Activated T-helper 1 cell treated with anti-CD3 and anti-CD28 coated beads, Interleukin-12 subunit alpha, Interleukin-12 subunit beta, Interleukin-2, Interleukin-4 antibody, amounts not matched to agents 30 ng/mL and 10 ng/mL and 1 ng/mL, durations not matched to agents 14 hours and 24 hours and 36 hours (primary cell): ENCODE measurements at regions of chr19 and their contacts with region 1.

Region 1: DNA sequence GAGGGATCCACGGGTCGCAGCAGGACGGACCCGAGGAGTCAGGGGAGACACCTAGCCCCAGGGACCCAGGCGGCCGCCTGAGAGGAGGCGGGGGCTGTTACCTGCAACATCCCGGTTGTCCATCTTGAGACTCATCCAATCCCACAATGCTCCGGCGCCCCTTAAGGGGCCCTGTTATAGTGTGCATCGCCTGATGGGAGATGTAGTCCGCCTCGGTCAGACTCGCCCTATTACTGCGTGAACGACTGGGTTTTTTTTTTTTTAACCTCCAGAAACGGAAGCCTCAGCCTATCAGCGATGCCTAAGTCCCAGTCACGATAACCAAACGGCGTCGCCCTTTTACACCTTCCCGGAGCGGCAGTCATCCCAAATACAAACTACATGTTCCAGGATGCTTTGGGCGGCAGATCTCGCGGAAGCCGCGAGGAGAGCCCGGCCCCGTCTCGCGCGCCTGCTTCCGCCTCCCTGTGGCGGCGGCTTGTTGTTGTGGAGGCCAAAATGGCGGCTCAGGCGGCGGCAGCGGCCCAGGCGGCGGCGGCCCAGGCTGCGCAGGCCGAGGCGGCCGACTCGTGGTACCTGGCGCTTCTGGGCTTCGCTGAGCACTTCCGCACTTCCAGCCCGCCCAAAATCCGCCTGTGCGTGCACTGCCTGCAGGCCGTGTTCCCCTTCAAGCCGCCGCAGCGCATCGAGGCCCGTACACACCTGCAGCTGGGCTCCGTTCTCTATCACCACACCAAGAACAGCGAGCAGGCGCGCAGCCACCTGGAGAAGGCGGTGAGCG is at the starts of genes MAU2 and SUGP1:
- DNase-seq: peak; percentile 89
- H3K4me3 Mint-ChIP-seq: peak within 1 kb of the TSS; percentile 94
- H3K27ac Mint-ChIP-seq: peak within 1 kb of the TSS; percentile 98
- H3K4me1 Mint-ChIP-seq: peaks cover 20% of the 10 kb centered on the region
- H3K27me3 Mint-ChIP-seq: no peaks in the 10 kb centered on the region
- total RNA-seq, gene MAU2: 71.4 and 73.4 TPM in 2 replicates
- total RNA-seq, gene SUGP1: 76.3 and 79.8 TPM in 2 replicates

Region 2: GRCh38 chr19:19138169-19138981 is 182.2 kb before region 1 on chr19 and contains the start of gene TMEM161A:
- intact Hi-C with region 1: loop called (anchors 1 kb)
- DNase-seq: peak; percentile 97
- H3K4me3 Mint-ChIP-seq: peak within 1 kb of the TSS; percentile 92
- H3K27ac Mint-ChIP-seq: peak within 1 kb of the TSS; percentile 93
- H3K4me1 Mint-ChIP-seq: peaks cover 22% of the 10 kb centered on the region
- H3K27me3 Mint-ChIP-seq: peaks cover 3% of the 10 kb centered on the region
- total RNA-seq, gene TMEM161A: 46.0 and 48.9 TPM in 2 replicates

Region 3: GRCh38 chr19:19192078-19192882 is 128.3 kb before region 1 on chr19 and contains the starts of genes BORCS8 and RFXANK:
- intact Hi-C with region 1: loop called (anchors 1 kb)
- DNase-seq: peak; percentile 99
- H3K4me3 Mint-ChIP-seq: peak within 1 kb of the TSS; percentile 96
- H3K27ac Mint-ChIP-seq: peak within 1 kb of the TSS; percentile 99
- H3K4me1 Mint-ChIP-seq: peaks cover 20% of the 10 kb centered on the region
- H3K27me3 Mint-ChIP-seq: no peaks in the 10 kb centered on the region
- total RNA-seq, gene BORCS8: 37.8 and 38.6 TPM in 2 replicates
- total RNA-seq, gene RFXANK: 101 and 103 TPM in 2 replicates

Region 4: DNA sequence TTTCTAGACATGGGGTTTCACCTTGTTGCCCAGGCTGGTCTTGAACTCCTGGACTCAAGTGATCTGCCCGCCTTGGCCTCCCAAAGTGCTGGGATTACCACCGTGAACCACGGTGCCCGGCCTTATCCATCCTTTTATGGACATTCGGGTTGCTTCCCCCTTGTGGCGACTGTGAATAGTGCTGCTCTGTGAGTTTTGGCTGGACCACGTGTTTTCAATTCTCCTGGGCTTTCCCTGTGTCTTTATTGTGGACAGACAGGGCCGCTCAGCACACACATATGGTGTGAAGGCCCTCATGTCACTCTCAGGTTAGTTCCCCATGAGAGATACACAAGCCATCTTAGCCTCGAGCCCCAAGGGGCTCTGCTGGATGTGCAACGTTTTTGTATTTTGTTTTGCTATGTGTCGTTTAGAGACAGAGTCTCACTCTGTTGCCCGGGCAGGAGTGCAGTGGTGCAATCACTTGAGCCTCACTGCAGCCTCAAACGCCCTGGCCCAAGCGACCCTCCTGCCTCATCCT is 40.6 kb after region 1 on chr19:
- intact Hi-C with region 1: loop called (anchors 1 kb)
- DNase-seq: peak; percentile 65
- H3K4me3 Mint-ChIP-seq: no peak overlapping the region
- H3K27ac Mint-ChIP-seq: peak overlapping the region; percentile 52
- H3K4me1 Mint-ChIP-seq: peaks cover 30% of the 10 kb centered on the region
- H3K27me3 Mint-ChIP-seq: no peaks in the 10 kb centered on the region

Region 5: DNA sequence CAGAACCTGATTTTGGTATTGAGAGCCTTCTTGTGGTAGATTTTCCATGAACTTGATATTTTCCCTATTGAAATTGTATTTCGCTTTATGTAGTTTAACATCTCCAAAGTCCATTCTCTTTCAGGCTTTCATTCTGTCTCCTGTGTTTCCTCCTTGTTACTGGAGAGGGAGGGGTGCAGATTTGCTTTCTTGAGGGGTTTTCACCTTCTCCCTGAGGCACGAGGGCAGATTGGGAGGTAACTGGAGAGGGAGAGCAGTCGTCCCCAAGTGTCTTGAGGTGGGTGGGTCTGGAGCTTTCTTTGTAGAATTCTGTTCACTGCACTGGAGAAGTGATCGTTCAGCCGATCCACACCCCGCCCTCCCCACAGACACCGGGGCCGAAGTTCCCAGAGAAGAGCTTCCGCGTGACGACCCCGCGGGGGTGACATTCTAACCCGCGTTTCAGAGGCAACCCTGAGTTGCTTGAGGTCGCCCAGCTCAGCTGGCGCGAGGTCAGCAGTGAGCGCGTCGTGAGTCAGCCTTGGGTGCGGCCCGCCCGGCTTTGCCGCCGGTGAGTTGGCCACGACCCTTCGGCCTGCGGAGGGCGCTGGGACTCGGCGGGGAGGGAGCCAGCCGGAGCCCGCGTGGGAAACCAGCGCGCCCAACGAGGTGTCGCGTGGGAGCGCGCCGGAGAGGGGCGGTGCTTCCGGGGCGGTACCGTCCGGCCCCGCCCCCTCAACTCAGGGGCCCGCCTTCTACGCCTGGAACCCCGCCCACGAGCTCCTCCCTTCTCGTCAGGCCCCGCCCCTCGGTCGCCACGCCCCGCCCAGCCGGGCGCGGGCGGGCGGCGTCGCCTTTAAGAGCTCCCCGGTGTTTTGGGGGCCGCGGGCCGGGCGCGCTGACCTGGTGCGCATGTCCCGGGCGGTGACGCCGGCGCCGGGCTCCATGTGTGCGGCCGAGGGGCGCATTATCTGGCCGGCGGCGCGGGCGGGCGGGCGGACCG is 84.6 kb after region 1 on chr19 and contains the start of gene GATAD2A:
- intact Hi-C with region 1: loop called (anchors 5 kb)
- DNase-seq: peak; percentile 88
- H3K4me3 Mint-ChIP-seq: peak within 1 kb of the TSS; percentile 99
- H3K27ac Mint-ChIP-seq: peak within 1 kb of the TSS; percentile 97
- H3K4me1 Mint-ChIP-seq: peaks cover 60% of the 10 kb centered on the region
- H3K27me3 Mint-ChIP-seq: no peaks in the 10 kb centered on the region
- total RNA-seq, gene GATAD2A: 139 and 142 TPM in 2 replicates

Region 6: DNA sequence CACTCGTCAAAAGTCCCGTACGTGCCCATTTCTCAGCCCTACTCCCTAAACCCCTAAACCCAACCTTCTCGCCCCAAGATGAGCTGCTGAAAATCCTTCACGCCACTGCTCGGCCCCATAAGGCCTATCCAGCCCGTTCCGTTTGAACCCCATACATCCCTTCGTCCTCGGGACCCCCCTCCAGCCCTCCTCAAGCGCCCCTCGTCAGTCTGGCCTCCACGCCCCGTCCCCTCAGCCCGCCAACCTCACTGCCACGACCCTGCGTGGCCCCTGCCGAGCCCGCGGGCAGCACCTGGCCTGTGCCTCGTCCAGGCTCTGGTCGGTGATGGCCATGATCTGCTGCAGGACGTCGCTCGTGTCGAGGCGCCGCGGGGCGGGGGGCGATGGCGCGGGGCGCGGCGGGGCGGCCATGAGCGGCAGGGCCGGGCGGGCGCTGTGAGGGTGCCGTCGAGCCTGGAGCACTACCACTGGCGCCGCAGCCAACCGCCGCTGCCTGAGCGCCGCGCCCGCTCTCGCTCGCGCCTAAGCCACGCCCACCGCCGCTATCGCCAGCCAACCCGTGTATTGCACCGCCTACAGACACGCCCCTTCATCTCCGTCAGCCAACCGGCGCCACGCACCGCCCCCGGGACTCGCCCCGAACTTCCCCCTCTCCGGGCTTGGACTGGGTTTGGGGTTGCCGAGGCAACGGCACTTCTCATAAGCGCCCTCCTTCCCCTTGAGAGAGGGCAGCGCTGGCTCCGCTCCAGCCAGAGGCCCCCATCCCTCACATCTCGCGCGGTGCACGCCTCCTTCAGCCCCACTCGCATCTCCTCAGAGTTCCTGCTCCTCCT is 297.9 kb after region 1 on chr19 and contains the start of gene PBX4:
- intact Hi-C with region 1: loop called (anchors 5 kb)
- DNase-seq: peak; percentile 99
- H3K4me3 Mint-ChIP-seq: peak within 1 kb of the TSS; percentile 88
- H3K27ac Mint-ChIP-seq: peak within 1 kb of the TSS; percentile 95
- H3K4me1 Mint-ChIP-seq: peaks cover 48% of the 10 kb centered on the region
- H3K27me3 Mint-ChIP-seq: no peaks in the 10 kb centered on the region
- total RNA-seq, gene PBX4: 28.0 and 29.6 TPM in 2 replicates